Astrocyte of the cerebellum (primary cell): ENCODE measurements at regions of chr15 and their contacts with region 1.

Region 1: GRCh38 chr15:74433592-74434262 is at the start of gene SEMA7A:
- DNase-seq: peak; percentile 20
- H3K4me3 ChIP-seq: peak within 1 kb of the TSS; percentile 76
- CTCF ChIP-seq: no peak

Region 2: DNA sequence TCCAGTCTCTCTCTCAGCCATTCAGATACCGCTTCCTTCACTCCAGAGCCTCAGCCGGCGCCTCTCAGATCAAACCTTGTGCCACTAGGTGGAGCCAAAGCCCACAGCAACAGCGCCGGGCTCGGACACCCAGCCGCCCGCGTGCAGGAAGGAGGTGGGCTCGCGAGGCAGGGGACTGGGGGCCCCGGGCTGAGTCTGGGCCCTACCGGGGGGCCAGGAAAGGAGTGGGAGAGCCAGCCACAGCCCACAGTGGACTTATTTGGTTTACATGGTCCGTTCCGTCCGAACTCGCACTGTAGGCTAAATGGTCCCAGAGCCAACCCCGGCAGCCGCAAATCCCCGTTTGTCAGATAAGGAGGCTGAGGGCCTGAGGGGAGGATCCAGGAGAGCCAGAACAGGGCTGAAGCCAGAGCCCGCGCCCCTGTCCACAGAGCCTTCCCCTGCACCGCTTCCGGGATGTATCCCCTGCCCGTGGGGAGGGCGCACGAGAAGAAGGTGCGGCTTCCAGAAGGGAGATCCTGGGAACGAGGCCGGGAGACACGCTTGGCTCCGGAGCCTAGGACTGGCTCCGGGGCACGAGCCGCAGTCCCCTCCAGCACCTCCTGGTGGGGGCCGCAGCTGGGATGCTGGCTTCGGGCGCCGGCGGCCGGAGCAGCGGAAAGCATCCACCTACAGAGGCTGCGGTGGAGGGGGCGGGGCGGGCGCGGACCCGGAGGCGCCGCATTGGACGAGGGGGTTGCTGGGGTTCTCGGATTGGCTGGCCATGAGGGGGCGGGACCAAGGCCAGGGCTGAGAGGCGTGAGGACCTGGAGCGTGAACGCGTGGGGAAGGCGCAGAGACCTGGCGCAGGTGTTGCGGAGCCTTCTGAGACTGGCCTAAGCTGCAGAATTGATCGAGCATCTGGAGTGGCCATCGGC is 59.7 kb before region 1 on chr15:
- in situ Hi-C with region 1: loop called (anchors 10 kb)
- DNase-seq: peak; percentile 53
- H3K4me3 ChIP-seq: peak overlapping the region; percentile 69
- CTCF ChIP-seq: peak; percentile 88

Region 3: GRCh38 chr15:74497584-74497983 is 63.9 kb after region 1 on chr15:
- in situ Hi-C with region 1: no loop called
- DNase-seq: no peak
- H3K4me3 ChIP-seq: no peak overlapping the region
- CTCF ChIP-seq: no peak